Natural killer cell (primary cell): ENCODE measurements at regions of chr11 and their contacts with region 1.

Region 1: GRCh38 chr11:111841370-111842053 is 29.9 kb downstream of the ALG9 start:
- DNase-seq: peak; percentile 80 to 91
- ATAC-seq: peak; percentile 93 to 98 (median 95)
- H3K4me3 ChIP-seq: no peak overlapping the region
- H3K4me3 Mint-ChIP-seq: no peak overlapping the region
- H3K27ac ChIP-seq: no peak overlapping the region
- H3K27ac Mint-ChIP-seq: no peak overlapping the region
- H3K4me1 ChIP-seq: no peaks in the 10 kb centered on the region
- H3K4me1 Mint-ChIP-seq: peaks cover 5 to 9% of the 10 kb centered on the region in 2 donors
- H3K27me3 ChIP-seq: no peaks in the 10 kb centered on the region
- H3K27me3 Mint-ChIP-seq: no peaks in the 10 kb centered on the region
- CTCF ChIP-seq: peak; percentile 96

Region 2: DNA sequence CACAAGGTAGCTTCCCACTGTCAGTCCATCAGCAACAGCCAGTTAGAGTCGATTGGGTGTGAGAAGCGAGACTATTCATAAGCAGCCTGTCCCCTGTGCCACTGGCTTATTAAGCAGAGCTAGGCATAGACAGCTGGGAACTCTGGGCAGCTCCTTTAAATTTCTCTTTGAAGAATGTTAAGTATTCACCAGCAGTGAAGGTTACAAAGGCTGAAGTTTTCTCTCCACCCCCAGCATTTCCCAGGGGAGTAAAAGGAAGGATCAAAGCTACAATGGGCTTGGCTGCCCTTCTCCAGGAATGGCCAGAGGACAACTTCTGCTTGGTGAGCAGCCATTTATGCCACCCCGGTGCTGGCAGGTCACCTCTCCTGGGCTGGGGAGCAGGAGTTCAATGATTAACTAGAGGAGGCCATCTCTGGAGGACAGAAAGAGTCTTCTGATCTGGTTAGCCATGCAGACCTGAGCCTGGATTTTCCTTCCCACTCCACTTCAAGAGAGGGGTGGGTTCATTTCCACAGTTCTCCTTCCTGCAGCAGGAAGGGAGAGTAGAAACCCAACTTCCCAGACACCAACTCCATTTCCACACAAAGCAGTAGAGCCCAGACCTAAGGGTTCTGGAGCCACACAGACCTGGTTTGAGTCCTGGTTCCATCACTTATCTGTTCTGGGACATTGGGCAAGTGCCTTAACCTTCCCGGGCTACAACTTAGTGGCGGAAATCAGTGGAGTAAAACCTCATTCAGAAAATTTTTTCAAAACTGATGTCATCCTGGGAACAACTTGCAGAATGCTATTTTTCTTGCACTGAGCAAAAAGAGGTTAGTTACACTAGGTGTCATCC is 520.6 kb before region 1 on chr11:
- intact Hi-C with region 1: no loop called
- DNase-seq: no peak
- ATAC-seq: no peak
- H3K4me3 ChIP-seq: no peak overlapping the region
- H3K4me3 Mint-ChIP-seq: no peak overlapping the region
- H3K27ac ChIP-seq: no peak overlapping the region
- H3K27ac Mint-ChIP-seq: no peak overlapping the region
- H3K4me1 ChIP-seq: no peaks in the 10 kb centered on the region
- H3K4me1 Mint-ChIP-seq: no peaks in the 10 kb centered on the region
- H3K27me3 ChIP-seq: no peaks in the 10 kb centered on the region
- H3K27me3 Mint-ChIP-seq: peaks cover 8 to 12% of the 10 kb centered on the region in 2 donors
- CTCF ChIP-seq: no peak

Region 3: DNA sequence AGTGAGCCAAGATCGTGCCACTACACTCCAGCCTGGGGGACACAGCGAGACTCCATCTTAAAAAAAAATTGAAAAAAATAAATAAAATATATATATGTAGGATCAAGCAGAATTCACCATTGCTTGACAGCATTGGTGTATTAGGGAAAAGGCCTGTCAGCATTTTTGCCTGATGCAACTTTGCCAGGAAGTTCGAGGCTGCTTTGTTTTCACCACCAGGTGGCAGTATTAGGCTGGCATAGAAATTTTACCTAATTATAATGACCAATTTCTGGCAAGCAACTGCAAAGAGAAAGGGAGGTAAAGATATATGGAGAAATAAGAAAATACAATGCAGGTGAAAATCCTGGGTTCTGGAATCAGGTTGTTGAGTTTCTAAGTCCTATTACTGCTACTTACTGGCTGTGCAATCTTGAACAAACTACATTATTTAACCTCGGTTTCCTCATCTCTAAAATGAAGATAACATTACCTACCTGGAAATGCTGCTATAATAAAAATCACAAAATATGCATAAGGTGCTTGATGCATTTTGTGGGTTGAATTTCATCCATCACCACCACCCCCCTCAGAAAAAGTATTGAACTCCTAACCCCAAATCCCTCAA is 276.3 kb before region 1 on chr11:
- intact Hi-C with region 1: loop called (anchors 1 kb)
- DNase-seq: peak; percentile 41 to 80
- ATAC-seq: peak; percentile 49 to 57 (median 53)
- H3K4me3 ChIP-seq: no peak overlapping the region
- H3K4me3 Mint-ChIP-seq: no peak overlapping the region
- H3K27ac ChIP-seq: no peak overlapping the region
- H3K27ac Mint-ChIP-seq: no peak overlapping the region
- H3K4me1 ChIP-seq: no peaks in the 10 kb centered on the region
- H3K4me1 Mint-ChIP-seq: no peaks in the 10 kb centered on the region
- H3K27me3 ChIP-seq: no peaks in the 10 kb centered on the region
- H3K27me3 Mint-ChIP-seq: peaks cover 0 to 18% of the 10 kb centered on the region in 2 donors
- CTCF ChIP-seq: peak; percentile 91

Region 4: GRCh38 chr11:111586388-111586831 is 255.1 kb before region 1 on chr11:
- intact Hi-C with region 1: loop called (anchors 1 kb)
- DNase-seq: peak in 1 of 2 donors; percentile 79
- ATAC-seq: peak; percentile 53 to 73 (median 67)
- H3K4me3 ChIP-seq: no peak overlapping the region
- H3K4me3 Mint-ChIP-seq: no peak overlapping the region
- H3K27ac ChIP-seq: no peak overlapping the region
- H3K27ac Mint-ChIP-seq: no peak overlapping the region
- H3K4me1 ChIP-seq: no peaks in the 10 kb centered on the region
- H3K4me1 Mint-ChIP-seq: no peaks in the 10 kb centered on the region
- H3K27me3 ChIP-seq: no peaks in the 10 kb centered on the region
- H3K27me3 Mint-ChIP-seq: peaks cover 0 to 3% of the 10 kb centered on the region in 2 donors
- CTCF ChIP-seq: peak; percentile 77

Region 5: GRCh38 chr11:111777094-111778046 is 64.1 kb before region 1 on chr11:
- intact Hi-C with region 1: loop called (anchors 1 kb)
- DNase-seq: peak in 1 of 2 donors; percentile 82
- ATAC-seq: peak; percentile 81 to 91 (median 88)
- H3K4me3 ChIP-seq: no peak overlapping the region
- H3K4me3 Mint-ChIP-seq: no peak overlapping the region
- H3K27ac ChIP-seq: no peak overlapping the region
- H3K27ac Mint-ChIP-seq: no peak overlapping the region
- H3K4me1 ChIP-seq: no peaks in the 10 kb centered on the region
- H3K4me1 Mint-ChIP-seq: no peaks in the 10 kb centered on the region
- H3K27me3 ChIP-seq: no peaks in the 10 kb centered on the region
- H3K27me3 Mint-ChIP-seq: no peaks in the 10 kb centered on the region
- CTCF ChIP-seq: peak; percentile 68

Region 6: GRCh38 chr11:111797145-111797581 is 44.3 kb before region 1 on chr11:
- intact Hi-C with region 1: no loop called
- DNase-seq: peak in 1 of 2 donors; percentile 6
- ATAC-seq: no peak
- H3K4me3 ChIP-seq: no peak overlapping the region
- H3K4me3 Mint-ChIP-seq: no peak overlapping the region
- H3K27ac ChIP-seq: no peak overlapping the region
- H3K27ac Mint-ChIP-seq: no peak overlapping the region
- H3K4me1 ChIP-seq: no peaks in the 10 kb centered on the region
- H3K4me1 Mint-ChIP-seq: no peaks in the 10 kb centered on the region
- H3K27me3 ChIP-seq: no peaks in the 10 kb centered on the region
- H3K27me3 Mint-ChIP-seq: no peaks in the 10 kb centered on the region
- CTCF ChIP-seq: no peak

Region 7: DNA sequence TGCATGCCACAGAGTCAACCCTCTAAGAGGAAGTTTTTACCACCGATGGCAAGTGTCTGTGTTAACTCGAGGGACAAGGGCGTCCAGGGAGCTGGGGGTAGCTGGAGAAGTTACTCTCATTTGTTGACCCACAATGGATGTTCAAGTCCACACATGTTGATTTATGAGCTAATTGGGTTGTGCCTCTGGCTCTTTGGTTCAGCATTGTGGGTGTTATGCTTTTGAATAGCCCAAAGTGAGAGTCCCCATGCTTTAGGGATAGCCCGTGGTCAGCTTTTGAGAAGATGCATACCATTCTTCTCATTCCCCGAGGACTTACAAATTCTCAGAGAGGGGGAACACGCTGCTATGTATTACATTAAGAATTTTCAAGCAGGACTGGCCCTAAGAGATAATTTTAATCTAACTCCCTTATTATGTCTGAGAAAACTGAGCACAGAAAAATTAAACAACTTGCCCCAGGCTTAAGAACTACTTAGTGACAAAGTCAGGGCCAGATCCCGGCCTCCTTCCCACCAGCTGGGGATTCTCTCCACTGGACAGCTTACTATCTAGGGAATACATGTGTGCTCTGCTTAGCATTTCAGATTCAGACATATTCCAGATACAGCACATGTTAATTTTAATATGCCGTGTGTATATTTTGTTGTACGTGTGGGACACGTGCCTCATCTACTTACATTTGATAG is 424.4 kb after region 1 on chr11:
- intact Hi-C with region 1: no loop called
- DNase-seq: no peak
- ATAC-seq: no peak
- H3K4me3 ChIP-seq: no peak overlapping the region
- H3K4me3 Mint-ChIP-seq: no peak overlapping the region
- H3K27ac ChIP-seq: no peak overlapping the region
- H3K27ac Mint-ChIP-seq: no peak overlapping the region
- H3K4me1 ChIP-seq: no peaks in the 10 kb centered on the region
- H3K4me1 Mint-ChIP-seq: no peaks in the 10 kb centered on the region
- H3K27me3 ChIP-seq: no peaks in the 10 kb centered on the region
- H3K27me3 Mint-ChIP-seq: no peaks in the 10 kb centered on the region
- CTCF ChIP-seq: no peak